Dendritic cell treated with granulocyte-macrophage colony-stimulating factor and Interleukin-4, amounts not matched to agents 40 ng/mL and 50 ng/mL, for 4 days (primary cell): ENCODE measurements at regions of chr14 and their contacts with region 1.

Region 1: DNA sequence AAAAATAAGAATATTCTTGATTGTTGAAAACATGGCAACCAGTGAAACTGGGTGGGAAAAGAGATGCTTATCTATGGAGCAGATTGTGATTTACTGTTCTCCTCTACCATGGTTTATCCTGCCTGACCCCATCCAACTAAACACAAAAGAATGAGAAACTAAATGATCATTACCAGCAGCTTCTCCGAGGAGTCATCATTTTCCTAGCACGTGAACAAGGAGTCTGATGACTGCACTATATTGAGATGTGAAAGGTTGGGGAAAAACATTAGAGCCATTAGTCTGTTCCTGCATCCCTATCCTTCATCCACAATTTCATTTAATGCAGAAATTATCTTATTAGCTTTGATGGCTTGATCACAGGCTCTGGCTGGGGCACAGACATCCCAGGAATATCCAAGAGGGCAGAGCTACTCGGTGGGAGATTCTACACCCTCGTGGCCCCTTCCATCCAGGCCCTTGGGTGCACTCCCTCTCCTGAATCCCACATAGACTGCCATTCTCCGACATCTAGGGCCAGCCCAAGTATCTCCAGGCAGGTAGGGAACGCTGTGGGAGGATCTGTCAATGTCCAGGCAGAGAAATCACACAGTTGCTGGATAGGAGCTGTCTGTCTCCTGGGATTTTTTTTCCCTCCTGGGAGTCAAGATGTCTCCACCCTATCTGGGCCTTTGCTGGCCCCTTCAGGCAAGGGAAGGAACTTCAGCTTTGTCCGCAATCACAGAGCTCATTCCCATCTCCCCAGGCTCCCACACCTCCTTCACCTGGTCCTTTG is 43.3 kb upstream of the DHRS4 start:
- H3K4me3 Mint-ChIP-seq: no peak overlapping the region
- H3K27ac Mint-ChIP-seq: no peak overlapping the region
- H3K4me1 Mint-ChIP-seq: peaks cover 5% of the 10 kb centered on the region
- H3K27me3 Mint-ChIP-seq: peaks cover 4% of the 10 kb centered on the region

Region 2: DNA sequence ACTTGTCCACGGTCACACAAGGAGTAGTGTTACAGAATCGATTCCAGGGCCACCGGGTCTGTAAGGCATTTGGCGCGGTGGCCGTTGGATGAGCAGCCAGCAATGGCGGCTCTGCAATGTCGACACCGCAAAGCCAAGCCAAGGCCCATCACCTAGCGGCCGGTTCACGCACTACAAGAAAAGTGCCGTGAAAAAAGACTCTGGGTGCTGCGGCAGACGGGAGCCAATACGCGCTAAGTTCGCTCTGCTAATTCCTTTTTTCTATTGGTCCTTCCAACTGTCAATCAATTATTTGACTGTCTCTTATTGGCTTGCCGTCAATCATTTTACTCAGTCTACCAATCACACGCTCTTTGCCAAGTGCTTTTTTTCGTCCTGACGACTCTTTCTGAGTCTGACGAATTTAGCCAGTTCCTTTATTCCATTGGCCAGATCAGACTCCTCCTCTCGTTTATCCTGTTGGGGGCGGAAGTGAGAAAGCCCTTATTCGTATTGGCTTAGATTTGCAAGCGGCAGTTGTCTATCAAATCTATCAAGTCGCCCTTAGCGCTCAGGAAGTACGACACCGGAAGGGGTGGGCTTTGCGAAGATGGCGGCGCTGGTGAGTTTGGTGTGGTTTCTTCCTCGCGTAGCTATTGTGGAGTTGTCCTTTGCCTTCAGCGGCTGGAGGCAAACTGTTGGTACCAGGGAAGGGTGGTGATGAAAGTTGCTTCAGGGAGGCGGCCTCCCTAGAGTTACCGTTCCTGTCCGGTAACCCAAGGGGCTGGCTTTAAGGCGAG is 441.0 kb before region 1 on chr14 and contains the start of gene NGDN:
- intact Hi-C with region 1: no loop called
- H3K4me3 Mint-ChIP-seq: peak within 1 kb of the TSS; percentile 6
- H3K27ac Mint-ChIP-seq: no peak within 1 kb of the TSS
- H3K4me1 Mint-ChIP-seq: no peaks in the 10 kb centered on the region
- H3K27me3 Mint-ChIP-seq: peaks cover 2% of the 10 kb centered on the region

Region 3: DNA sequence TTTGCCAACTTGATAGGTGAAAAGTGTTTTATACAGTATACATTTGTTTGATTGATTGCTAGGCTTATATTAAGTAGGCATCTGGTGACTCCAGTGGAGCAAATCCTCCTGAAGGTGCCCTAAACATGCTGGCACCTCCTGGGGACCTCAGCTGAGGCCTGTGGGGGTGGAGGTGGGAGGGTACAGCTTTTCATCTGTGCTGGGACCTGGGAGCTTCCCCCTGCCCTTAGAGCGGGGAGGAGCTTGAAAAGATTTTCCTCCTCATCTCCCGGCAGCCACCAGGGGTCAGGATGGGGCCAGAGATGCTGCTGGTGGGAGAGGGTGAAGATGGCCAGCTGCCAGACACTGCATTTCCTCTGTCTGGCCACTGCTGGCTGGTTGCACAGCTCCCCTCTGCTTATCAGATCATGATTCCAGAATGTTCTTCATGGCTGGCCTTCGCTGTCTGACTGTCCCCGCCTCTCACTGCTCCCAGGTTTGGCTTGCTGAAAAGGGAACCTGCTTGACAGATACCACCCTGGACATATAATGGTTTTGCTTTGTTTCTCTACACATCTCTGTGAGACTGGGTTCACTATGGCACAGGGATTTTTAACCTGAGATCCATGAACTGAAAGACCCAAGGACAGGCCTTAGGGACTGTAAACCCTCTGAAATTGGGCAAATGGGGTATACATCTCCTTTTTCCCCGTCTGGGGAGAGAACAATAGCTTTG is 321.2 kb before region 1 on chr14:
- intact Hi-C with region 1: loop called (anchors 1 kb)
- H3K4me3 Mint-ChIP-seq: no peak overlapping the region
- H3K27ac Mint-ChIP-seq: peak overlapping the region; percentile 60
- H3K4me1 Mint-ChIP-seq: peaks cover 13% of the 10 kb centered on the region
- H3K27me3 Mint-ChIP-seq: peaks cover 24% of the 10 kb centered on the region

Region 4: GRCh38 chr14:23631702-23632460 is 278.4 kb before region 1 on chr14:
- intact Hi-C with region 1: loop called (anchors 1 kb)
- H3K4me3 Mint-ChIP-seq: peak overlapping the region; percentile 58
- H3K27ac Mint-ChIP-seq: peak overlapping the region; percentile 50
- H3K4me1 Mint-ChIP-seq: peaks cover 54% of the 10 kb centered on the region
- H3K27me3 Mint-ChIP-seq: peaks cover 20% of the 10 kb centered on the region

Region 5: DNA sequence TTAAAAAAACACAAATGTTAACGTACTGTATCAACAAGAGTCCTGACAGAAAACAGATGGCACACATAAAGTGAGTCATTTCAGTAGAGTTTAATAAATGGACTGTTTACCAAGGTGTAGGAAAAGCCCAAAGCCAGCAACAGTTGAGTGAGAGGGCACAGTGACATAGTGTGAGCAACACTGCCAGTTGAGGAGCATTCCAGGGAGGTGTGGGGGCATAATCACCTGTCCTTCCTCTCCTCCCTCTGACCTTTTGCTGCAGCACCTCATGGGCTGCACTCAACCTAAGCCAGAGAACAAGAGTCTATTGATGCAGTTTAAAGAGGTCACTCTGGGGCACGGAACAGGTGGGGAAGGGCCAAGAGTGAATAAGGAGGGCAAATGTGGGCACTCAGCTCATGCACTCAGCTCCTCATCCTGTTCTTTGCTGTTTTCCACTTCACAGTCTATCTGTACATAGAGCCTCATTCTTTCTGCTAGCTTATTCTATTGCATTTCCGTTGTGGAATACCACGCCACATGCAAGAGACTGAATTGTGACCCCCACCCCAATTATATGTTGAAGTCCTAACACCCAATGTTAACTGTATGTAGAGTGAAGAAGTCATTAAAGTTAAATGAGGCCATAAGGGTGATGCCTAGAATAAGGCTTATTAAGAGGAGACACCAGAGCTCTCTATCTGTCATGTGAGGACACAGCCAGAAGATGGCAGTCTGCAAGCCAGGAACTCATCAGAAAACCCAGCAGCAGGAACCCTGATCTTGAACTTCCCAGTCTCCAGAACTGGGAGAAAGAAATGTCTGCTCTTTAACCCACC is 244.7 kb before region 1 on chr14:
- intact Hi-C with region 1: loop called (anchors 1 kb)
- H3K4me3 Mint-ChIP-seq: no peak overlapping the region
- H3K27ac Mint-ChIP-seq: no peak overlapping the region
- H3K4me1 Mint-ChIP-seq: no peaks in the 10 kb centered on the region
- H3K27me3 Mint-ChIP-seq: peaks cover 6% of the 10 kb centered on the region

Region 6: DNA sequence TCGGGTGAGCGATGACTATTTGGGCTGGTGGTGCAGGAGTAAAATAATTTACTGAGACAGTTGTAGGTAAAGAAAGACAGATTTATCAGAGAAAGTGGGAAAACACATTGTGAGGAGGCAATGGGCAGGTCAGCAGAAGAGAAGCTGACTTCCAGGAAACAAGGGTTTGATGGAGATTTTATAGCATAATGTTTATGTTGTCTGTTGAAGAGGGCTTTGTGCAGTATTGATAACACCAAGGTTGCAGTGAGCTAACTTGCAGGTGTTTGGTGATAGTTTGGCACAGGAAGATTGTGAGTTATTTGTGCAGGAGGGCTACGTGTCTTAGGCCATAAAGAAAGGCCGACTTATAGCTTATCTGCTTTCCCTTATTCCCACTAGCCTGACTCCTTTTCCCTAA is 201.9 kb before region 1 on chr14:
- intact Hi-C with region 1: no loop called
- H3K4me3 Mint-ChIP-seq: no peak overlapping the region
- H3K27ac Mint-ChIP-seq: no peak overlapping the region
- H3K4me1 Mint-ChIP-seq: no peaks in the 10 kb centered on the region
- H3K27me3 Mint-ChIP-seq: peaks cover 5% of the 10 kb centered on the region

Region 7: GRCh38 chr14:23727566-23728335 is 182.5 kb before region 1 on chr14:
- intact Hi-C with region 1: loop called (anchors 1 kb)
- H3K4me3 Mint-ChIP-seq: no peak overlapping the region
- H3K27ac Mint-ChIP-seq: no peak overlapping the region
- H3K4me1 Mint-ChIP-seq: no peaks in the 10 kb centered on the region
- H3K27me3 Mint-ChIP-seq: peaks cover 2% of the 10 kb centered on the region

Region 8: GRCh38 chr14:23793532-23793931 is 116.8 kb before region 1 on chr14:
- intact Hi-C with region 1: no loop called
- H3K4me3 Mint-ChIP-seq: no peak overlapping the region
- H3K27ac Mint-ChIP-seq: no peak overlapping the region
- H3K4me1 Mint-ChIP-seq: no peaks in the 10 kb centered on the region
- H3K27me3 Mint-ChIP-seq: peaks cover 2% of the 10 kb centered on the region